ENCODE measurements at regions of chr12 and their contacts with region 1.

Region 1: DNA sequence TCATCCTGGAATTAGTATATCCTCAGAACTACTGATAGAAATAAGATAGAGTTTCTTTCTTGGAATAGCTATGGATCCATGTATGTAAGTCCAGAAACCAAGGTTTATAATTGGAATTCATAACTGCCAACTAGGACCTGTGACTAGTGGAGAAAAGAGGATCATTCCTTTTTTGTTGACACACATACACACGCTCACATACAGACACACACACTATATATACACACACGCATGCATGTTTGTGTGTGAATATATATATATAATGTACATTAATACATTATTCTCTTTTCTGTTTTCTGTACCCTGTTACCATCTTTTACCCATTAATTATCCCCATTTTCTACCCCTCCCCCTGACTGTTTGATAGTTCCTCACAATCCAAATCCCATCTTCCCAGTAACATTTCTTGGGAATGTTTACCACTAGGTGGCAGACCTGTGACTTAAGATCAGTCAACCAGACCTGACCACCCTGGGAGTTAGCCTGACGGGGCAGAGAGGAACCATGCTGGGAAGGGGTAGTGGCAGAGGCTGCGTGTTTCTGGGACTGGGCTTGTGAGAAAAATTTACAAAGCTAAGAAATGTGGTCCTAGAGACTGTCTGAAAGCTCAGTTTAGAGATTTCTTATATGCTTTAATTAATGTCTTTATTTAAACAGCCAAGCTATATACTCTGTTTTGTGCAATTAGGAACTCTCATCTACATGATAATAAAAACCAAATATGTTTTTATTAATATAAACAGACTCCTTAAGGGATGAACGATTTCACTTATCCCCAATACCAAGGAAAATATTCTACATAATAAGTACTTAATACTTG is 308.0 kb downstream of the PPFIA2 start:
- DNase-seq: no peak
- H3K4me3 Mint-ChIP-seq: no peak overlapping the region
- H3K27ac Mint-ChIP-seq: no peak overlapping the region
- H3K4me1 Mint-ChIP-seq: no peaks in the 10 kb centered on the region
- H3K27me3 Mint-ChIP-seq: no peaks in the 10 kb centered on the region

Region 2: GRCh38 chr12:81360916-81361315 is 90.2 kb before region 1 on chr12:
- intact Hi-C with region 1: no loop called
- DNase-seq: no peak
- H3K4me3 Mint-ChIP-seq: no peak overlapping the region
- H3K27ac Mint-ChIP-seq: no peak overlapping the region
- H3K4me1 Mint-ChIP-seq: no peaks in the 10 kb centered on the region
- H3K27me3 Mint-ChIP-seq: no peaks in the 10 kb centered on the region

Region 3: DNA sequence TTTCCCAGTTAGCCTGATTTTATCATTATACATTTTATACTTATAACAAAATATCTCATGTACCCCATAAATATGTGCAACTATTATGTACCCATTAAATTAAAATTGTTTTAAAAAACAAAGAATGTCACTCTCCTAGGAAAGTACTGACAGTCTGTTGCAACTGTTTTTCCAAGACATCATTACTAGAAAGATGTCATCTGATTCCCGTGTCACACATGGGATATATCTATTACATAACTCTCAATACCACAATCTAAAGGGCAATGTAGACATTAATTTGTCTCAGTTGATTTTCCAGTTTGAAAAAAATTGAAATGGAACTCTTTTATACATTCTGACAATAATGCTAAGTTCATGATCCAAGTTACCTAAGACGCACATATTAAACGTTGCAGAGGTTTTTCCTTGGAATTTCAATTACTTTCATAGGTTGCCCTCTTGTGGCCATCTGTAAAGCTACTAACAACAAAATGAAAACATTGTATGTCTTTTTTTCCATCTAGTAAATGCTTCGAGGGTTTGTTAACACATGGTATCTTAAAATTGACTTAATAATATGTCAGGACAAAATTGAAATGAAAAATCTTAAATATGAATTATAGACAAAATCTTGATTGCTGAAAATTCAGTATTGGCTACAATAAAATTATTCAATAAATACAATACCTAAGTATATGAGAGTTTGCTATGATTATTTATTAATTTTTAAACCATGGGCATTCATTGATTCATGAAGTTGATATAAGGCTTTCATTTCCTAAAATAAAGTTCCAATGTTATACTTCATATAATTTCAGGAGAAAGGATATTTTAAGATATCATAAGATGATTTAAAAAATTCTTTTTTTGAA is 176.4 kb after region 1 on chr12:
- intact Hi-C with region 1: loop called (anchors 5 kb)
- DNase-seq: no peak
- H3K4me3 Mint-ChIP-seq: no peak overlapping the region
- H3K27ac Mint-ChIP-seq: no peak overlapping the region
- H3K4me1 Mint-ChIP-seq: no peaks in the 10 kb centered on the region
- H3K27me3 Mint-ChIP-seq: no peaks in the 10 kb centered on the region

Measured in activated T-helper 2 cell treated with anti-CD3 and anti-CD28 coated beads, Interferon-gamma antibody, Interleukin-2, Interleukin-4, amounts not matched to agents 10 μg/mL and 5 μg/mL and 100 μg/mL, durations not matched to agents 14 hours and 24 hours and 36 hours (primary cell).